ENCODE measurements at regions of chr19 and their contacts with region 1.

Region 1: DNA sequence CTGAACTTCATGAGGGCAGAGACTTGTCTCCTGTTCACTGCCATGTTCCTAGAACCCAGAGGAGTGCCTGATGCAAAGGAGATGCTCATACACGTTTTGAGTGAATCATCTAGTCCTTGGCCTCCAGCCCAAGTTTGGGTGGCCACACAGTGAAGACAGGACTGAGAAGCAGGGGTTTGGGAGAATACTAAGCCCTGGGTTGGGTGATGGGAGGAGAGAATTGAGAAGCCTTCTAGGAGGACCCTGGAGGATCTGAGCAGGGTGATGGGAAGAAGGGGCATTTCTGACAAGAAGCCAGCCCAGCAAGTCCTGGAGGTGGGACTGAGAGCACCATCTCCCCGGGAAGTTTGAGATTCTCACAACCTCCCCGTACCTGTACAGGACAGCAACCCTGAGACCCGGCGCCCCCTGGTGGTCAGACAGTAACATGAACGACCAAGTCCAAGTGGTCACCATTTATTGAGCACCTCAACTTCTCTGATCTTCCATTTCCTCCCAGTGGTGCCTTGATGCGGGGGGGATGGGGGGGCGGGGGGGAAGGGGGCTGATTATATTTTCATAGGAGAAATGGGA is 11.0 kb downstream of the CTU1 start:
- DNase-seq: peak; percentile 79
- ATAC-seq: peak; percentile 66

Region 2: DNA sequence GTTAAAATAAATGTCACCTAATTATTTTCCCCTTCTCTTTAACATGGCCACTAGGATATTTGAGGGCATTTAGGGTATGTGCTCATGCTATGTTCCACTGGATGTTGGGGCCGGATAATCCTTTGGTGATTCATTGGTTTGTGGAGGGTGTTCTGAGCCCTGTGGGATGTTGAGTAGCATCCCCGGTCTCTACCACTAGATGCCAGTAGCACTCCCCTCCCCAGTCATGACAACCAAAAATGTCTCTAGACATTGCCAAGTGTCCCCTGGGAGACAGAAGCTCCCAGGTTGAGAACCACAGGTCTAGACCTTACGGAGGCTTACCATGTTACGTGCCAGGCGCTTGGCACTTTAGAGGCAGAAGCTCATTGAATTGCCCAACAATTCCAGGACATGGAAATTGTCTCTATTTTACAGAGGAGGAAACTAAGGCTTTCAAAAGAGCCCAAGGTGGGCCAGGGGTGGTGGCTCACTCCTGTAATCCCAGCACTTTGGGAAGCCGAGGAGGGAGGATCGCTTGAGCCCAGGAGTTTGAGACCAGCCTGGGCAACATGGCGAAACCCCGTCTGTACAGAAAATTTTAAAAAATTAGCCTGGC is 391.7 kb before region 1 on chr19:
- intact Hi-C with region 1: no loop called
- DNase-seq: no peak
- ATAC-seq: no peak

Region 3: GRCh38 chr19:50922317-50922853 is 174.9 kb before region 1 on chr19:
- intact Hi-C with region 1: loop called (anchors 10 kb)
- DNase-seq: peak; percentile 63
- ATAC-seq: peak; percentile 90

Region 4: DNA sequence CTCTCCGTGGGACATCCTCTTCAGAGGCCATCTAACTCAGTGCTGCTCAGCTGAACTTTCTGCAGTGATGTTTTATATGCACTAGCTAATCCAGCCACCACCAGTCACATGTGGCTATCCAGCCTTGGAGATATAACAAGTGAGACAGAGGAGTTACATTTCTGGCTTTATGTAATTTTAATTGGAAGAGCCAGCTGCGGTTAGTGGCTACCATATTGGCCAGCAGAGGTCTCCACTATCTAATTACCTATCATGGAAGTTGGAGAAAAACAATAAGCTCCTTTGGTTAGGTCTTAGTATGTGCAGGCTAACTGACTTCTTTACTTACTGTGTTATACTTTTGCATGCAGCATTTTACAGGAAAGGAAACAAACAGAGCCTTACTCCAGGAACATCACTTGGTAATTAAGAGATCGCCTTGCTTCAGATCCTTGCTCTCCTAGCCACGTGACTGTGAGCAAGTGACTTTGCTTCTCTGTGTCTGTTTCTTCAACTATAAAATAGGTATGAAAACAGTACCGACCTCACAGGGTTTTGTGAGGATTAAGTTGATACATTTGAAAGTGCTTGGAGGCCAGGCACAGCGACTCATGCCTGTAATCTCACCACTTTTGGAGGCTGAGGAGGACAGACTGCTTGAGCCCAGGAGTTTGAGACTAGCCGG is 76.1 kb before region 1 on chr19:
- intact Hi-C with region 1: loop called (anchors 2 kb)
- DNase-seq: no peak
- ATAC-seq: peak; percentile 58

Region 5: GRCh38 chr19:51070861-51071406 is 26.3 kb before region 1 on chr19:
- intact Hi-C with region 1: no loop called
- DNase-seq: no peak
- ATAC-seq: no peak